Activated CD4-positive, alpha-beta memory T cell treated with anti-CD3 and anti-CD28 coated beads, Interleukin-2, amount 10 ng/mL, durations not matched to agents 7 days and 5 days (primary cell): ENCODE measurements at regions of chr10 and their contacts with region 1.

Region 1: GRCh38 chr10:73076360-73077183 is 20.1 kb downstream of the P4HA1 start:
- DNase-seq: no peak
- H3K4me3 Mint-ChIP-seq: no peak overlapping the region
- H3K27ac Mint-ChIP-seq: peak overlapping the region; percentile 79
- H3K4me1 Mint-ChIP-seq: peaks cover 17% of the 10 kb centered on the region
- H3K27me3 Mint-ChIP-seq: no peaks in the 10 kb centered on the region

Region 2: DNA sequence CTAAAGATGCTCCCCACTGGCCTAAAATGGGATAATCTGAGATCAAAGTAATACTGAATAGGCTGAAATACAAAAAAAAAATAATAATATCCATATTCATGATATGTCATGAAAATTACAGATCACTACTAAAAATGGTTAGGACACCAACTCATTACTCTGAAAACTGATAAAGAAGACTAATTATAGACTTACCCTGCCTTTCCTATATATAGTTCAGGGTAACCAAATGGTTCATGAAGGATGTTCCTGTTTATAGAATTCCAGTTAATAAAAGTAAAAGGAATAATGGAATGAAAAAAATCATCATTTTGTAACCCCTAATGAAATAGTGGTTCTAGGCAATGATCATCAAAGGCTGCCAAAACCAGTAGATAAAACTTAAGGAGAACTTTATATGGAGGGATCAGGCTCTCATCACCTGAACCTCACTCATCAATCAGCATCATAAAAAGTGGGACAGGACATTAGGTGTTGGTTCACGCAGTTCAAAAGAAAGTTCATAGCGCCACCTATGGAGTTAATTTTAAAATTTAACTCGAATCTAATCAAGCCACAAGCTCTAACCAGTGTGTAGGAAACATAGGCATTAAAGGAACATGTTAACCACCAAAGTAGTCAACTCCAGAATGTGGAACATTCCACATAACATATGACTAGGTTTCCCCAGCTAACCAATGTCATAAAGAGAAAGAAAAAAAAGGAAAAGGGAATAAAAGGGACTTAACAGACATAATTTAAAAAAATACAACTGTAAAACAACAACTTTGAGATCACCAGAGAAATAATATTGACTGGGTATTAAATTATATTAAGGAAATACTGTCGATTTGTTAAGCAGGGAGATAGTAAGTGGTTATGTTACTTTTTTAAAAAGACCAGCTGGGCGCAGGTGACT is 15.6 kb before region 1 on chr10:
- CTCF ChIA-PET with region 1: interaction called, 14 read pairs
- POLR2A ChIA-PET with region 1: no interaction called
- DNase-seq: no peak
- H3K4me3 Mint-ChIP-seq: no peak overlapping the region
- H3K27ac Mint-ChIP-seq: no peak overlapping the region
- H3K4me1 Mint-ChIP-seq: peaks cover 15% of the 10 kb centered on the region
- H3K27me3 Mint-ChIP-seq: no peaks in the 10 kb centered on the region

Region 3: GRCh38 chr10:73167458-73167782 is 90.8 kb after region 1 on chr10:
- CTCF ChIA-PET with region 1: no interaction called
- POLR2A ChIA-PET with region 1: no interaction called
- DNase-seq: no peak
- H3K4me3 Mint-ChIP-seq: peak overlapping the region; percentile 100
- H3K27ac Mint-ChIP-seq: peak overlapping the region; percentile 98
- H3K4me1 Mint-ChIP-seq: peaks cover 43% of the 10 kb centered on the region
- H3K27me3 Mint-ChIP-seq: no peaks in the 10 kb centered on the region